Activated CD8-positive, alpha-beta memory T cell treated with anti-CD3 and anti-CD28 coated beads, Interleukin-2, amount 10 ng/mL, durations not matched to agents 7 days and 5 days (primary cell): ENCODE measurements at regions of chr15 and their contacts with region 1.

Region 1: DNA sequence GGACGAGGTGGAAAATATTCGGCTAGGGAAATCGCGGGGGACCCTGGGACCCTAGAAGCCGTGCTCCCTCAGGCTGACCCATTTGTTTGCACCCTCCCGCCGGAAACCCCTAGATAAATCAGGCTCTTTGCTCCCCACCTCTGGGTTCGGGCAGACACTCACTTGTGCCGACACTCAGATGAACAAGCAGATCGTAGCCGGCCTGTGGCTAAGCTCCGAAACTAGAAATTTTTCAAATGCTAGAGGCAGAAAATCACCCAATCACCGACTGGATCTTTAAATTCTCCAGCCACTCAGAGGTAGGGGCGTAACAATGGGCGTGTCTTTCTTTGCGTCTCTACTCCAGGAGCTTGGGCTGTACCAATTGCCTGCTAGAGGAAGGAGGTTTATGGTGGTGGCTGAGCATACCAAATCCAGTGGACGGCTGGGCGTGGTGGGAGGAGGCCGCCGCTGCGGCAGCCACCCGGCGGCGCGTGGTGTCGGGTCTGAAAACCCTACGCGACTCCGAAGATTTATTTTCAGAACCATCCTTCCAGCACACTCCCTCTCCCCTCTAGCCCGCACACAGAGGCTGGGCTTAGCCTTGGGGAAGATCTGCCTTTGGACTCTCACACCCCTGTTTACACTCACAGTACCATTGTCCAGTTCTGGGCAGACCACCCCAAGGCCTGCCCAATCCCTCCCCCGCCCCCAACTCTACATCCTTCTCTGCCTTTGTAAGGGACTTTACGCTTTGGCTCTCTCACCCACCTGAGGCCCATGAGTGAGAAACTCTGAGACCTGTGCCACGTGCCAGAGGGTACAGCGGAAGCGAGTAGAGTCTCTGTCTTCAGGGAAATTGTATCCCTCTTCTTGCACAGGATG is at the start of gene PIF1:
- DNase-seq: peak; percentile 97
- ATAC-seq: peak; percentile 93
- H3K4me3 Mint-ChIP-seq: peak within 1 kb of the TSS; percentile 98
- H3K27ac Mint-ChIP-seq: peak within 1 kb of the TSS; percentile 93
- H3K4me1 Mint-ChIP-seq: peaks cover 33% of the 10 kb centered on the region
- H3K27me3 Mint-ChIP-seq: no peaks in the 10 kb centered on the region
- total RNA-seq, gene PIF1: 59.5 to 85.5 TPM

Region 2: GRCh38 chr15:64622410-64623260 is 203.0 kb before region 1 on chr15:
- CTCF ChIA-PET with region 1: no interaction called
- DNase-seq: peak; percentile 83
- ATAC-seq: peak; percentile 83
- H3K4me3 Mint-ChIP-seq: peak overlapping the region; percentile 60
- H3K27ac Mint-ChIP-seq: peak overlapping the region; percentile 93
- H3K4me1 Mint-ChIP-seq: peaks cover 78% of the 10 kb centered on the region
- H3K27me3 Mint-ChIP-seq: no peaks in the 10 kb centered on the region

Region 3: GRCh38 chr15:64809649-64810496 is 15.8 kb before region 1 on chr15:
- CTCF ChIA-PET with region 1: interaction called, 22 read pairs
- DNase-seq: peak; percentile 83
- ATAC-seq: peak; percentile 79
- H3K4me3 Mint-ChIP-seq: no peak overlapping the region
- H3K27ac Mint-ChIP-seq: no peak overlapping the region
- H3K4me1 Mint-ChIP-seq: peaks cover 2% of the 10 kb centered on the region
- H3K27me3 Mint-ChIP-seq: peaks cover 3% of the 10 kb centered on the region

Region 4: DNA sequence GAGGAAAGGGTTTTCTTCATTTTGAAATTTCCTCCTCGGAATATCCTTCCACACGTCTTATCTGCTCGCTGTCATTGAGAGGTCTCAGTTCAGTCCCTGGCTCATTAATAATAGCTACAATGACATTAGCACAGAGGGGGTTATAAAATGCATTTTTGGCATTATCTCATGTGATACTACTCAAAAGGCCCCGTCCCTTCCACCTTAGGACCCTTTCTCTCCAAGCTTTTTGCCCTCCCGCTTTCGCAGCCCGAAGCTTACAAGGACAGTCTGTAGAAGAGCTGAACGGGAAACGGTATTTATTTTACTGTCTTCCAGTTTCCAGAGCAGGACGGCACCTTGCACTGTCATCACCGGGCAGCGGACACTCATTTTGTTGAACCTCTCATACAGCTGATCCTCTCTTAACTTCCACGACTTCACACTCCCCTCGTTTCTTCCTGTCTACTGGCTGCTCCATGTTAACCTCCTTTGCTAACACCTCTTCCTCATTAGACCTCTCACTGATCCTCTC is 10.4 kb after region 1 on chr15:
- CTCF ChIA-PET with region 1: interaction called, 22 read pairs
- DNase-seq: no peak
- ATAC-seq: no peak
- H3K4me3 Mint-ChIP-seq: peak overlapping the region; percentile 42
- H3K27ac Mint-ChIP-seq: peak overlapping the region; percentile 63
- H3K4me1 Mint-ChIP-seq: peaks cover 46% of the 10 kb centered on the region
- H3K27me3 Mint-ChIP-seq: no peaks in the 10 kb centered on the region

Region 5: DNA sequence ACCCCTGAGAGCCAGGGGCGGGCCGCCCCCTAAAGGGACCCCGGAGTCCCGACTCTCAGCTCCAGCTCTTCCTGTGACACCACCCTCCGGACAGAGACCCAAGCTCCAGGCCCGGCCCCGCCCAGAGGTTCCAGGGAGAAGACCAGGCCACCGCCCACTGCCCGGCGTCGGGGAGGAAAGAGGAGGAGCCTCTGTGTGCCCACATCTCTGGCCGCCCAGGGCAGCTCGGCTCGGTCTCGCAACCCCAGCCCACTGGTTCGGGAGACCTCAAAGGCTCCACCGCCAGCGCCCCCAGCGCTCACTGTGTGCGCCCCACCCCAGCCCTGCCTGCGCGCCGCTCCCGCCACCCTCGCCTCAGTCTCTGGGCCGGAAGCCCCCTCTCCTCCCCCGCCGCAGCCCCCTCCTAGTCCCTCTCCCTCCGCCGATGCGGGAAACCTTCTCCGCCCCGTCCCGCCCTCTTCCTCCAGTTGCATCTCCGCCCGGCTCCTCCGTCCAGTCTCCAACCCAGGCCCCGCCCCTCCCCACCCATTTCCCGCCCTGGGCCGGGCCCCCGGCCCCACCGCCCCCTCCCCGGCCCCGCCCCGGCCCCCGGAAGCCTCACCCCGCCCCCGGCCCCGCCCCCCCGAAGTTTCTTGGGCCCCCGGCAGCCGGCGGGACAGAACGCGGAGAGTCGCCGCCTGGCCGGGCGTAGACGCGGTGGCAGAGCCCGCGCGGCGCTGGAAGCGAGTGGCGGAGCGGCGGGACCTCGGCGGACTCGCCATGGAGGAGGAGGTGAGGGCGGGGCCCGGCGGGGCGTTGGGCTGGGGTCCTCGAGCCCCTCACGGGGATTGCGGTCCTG is 15.8 kb after region 1 on chr15 and contains the start of gene PLEKHO2:
- CTCF ChIA-PET with region 1: interaction called, 22 read pairs
- DNase-seq: peak; percentile 97
- ATAC-seq: peak; percentile 78
- H3K4me3 Mint-ChIP-seq: peak within 1 kb of the TSS; percentile 99
- H3K27ac Mint-ChIP-seq: peak within 1 kb of the TSS; percentile 84
- H3K4me1 Mint-ChIP-seq: peaks cover 66% of the 10 kb centered on the region
- H3K27me3 Mint-ChIP-seq: no peaks in the 10 kb centered on the region
- total RNA-seq, gene PLEKHO2: 27.8 to 28.4 TPM